ENCODE measurements at regions of chr1 and their contacts with region 1.

Region 1: GRCh38 chr1:165768513-165769394 is at the start of gene TMCO1:
- DNase-seq: peak; percentile 96
- H3K4me3 Mint-ChIP-seq: peak within 1 kb of the TSS; percentile 99
- H3K27ac Mint-ChIP-seq: peak within 1 kb of the TSS; percentile 99
- H3K4me1 Mint-ChIP-seq: peaks cover 57% of the 10 kb centered on the region
- H3K27me3 Mint-ChIP-seq: no peaks in the 10 kb centered on the region
- total RNA-seq, gene TMCO1: 73.2 to 76.7 TPM

Region 2: GRCh38 chr1:165630629-165631341 is 138.0 kb before region 1 on chr1 and contains the start of gene MGST3:
- CTCF ChIA-PET with region 1: no interaction called
- POLR2A ChIA-PET with region 1: interaction called, 4 read pairs
- intact Hi-C with region 1: loop called (anchors 1 kb)
- DNase-seq: peak; percentile 97
- H3K4me3 Mint-ChIP-seq: no peak within 1 kb of the TSS
- H3K27ac Mint-ChIP-seq: no peak within 1 kb of the TSS
- H3K4me1 Mint-ChIP-seq: peaks cover 15% of the 10 kb centered on the region
- H3K27me3 Mint-ChIP-seq: no peaks in the 10 kb centered on the region
- total RNA-seq, gene MGST3: 53.3 to 56.6 TPM

Region 3: GRCh38 chr1:165787741-165788140 is 19.0 kb after region 1 on chr1:
- CTCF ChIA-PET with region 1: no interaction called
- POLR2A ChIA-PET with region 1: no interaction called
- intact Hi-C with region 1: no loop called
- DNase-seq: no peak
- H3K4me3 Mint-ChIP-seq: no peak overlapping the region
- H3K27ac Mint-ChIP-seq: no peak overlapping the region
- H3K4me1 Mint-ChIP-seq: no peaks in the 10 kb centered on the region
- H3K27me3 Mint-ChIP-seq: peaks cover 2% of the 10 kb centered on the region

Region 4: DNA sequence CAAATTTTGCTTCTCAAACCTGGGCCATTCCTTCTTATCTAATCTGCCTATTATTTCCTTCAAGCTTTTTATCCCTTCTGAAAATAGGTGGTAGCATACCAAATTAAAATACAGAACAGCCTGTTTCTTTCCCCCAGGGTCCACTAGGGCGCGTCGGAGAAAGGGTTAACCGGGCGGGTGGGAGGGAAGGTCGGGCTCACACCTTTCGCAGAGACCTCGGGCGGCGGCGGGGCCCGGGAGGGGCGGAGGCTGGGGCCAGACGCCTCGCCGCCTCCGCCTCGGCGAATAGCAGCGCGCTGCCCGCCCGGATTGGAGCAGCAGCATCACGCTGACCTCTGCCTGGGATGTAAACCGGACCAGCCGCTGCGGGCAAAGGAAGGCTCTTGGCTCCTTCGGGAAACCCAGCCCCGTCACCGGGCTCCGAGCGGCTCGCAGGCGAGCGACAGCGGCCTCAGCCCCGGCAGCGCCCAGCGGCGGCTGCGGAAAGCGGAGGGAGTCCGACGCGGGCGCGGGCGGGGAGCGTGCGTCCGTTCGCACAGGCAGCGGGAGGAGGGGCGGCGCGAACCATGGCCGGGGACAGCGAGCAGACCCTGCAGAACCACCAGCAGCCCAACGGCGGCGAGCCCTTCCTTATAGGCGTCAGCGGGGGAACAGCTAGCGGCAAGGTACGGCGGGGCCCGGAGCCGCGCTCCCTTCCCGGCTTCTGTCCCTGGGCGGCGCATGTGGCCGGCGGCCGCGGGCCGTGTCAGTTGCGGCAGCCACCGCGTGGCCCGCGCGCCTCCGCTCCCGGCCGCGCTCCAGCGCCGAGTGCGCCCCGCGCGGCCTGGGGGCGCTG is 58.7 kb after region 1 on chr1 and contains the start of gene UCK2:
- CTCF ChIA-PET with region 1: no interaction called
- POLR2A ChIA-PET with region 1: interaction called, 14 read pairs
- intact Hi-C with region 1: loop called (anchors 1 kb)
- DNase-seq: peak; percentile 75
- H3K4me3 Mint-ChIP-seq: peak within 1 kb of the TSS; percentile 91
- H3K27ac Mint-ChIP-seq: peak within 1 kb of the TSS; percentile 88
- H3K4me1 Mint-ChIP-seq: peaks cover 9% of the 10 kb centered on the region
- H3K27me3 Mint-ChIP-seq: no peaks in the 10 kb centered on the region
- total RNA-seq, gene UCK2: 60.1 to 61.8 TPM

Region 5: GRCh38 chr1:165914136-165914798 is 145.5 kb after region 1 on chr1:
- CTCF ChIA-PET with region 1: interaction called, 13 read pairs
- POLR2A ChIA-PET with region 1: no interaction called
- intact Hi-C with region 1: loop called (anchors 1 kb)
- DNase-seq: peak; percentile 71
- H3K4me3 Mint-ChIP-seq: no peak overlapping the region
- H3K27ac Mint-ChIP-seq: no peak overlapping the region
- H3K4me1 Mint-ChIP-seq: peaks cover 3% of the 10 kb centered on the region
- H3K27me3 Mint-ChIP-seq: no peaks in the 10 kb centered on the region

Region 6: GRCh38 chr1:166489670-166490436 is 721.1 kb after region 1 on chr1:
- CTCF ChIA-PET with region 1: no interaction called
- POLR2A ChIA-PET with region 1: no interaction called
- intact Hi-C with region 1: loop called (anchors 5 kb)
- DNase-seq: peak; percentile 58
- H3K4me3 Mint-ChIP-seq: no peak overlapping the region
- H3K27ac Mint-ChIP-seq: no peak overlapping the region
- H3K4me1 Mint-ChIP-seq: peaks cover 8% of the 10 kb centered on the region
- H3K27me3 Mint-ChIP-seq: peaks cover 1% of the 10 kb centered on the region

Measured in activated CD4-positive, alpha-beta memory T cell treated with anti-CD3 and anti-CD28 coated beads for 36 hours (primary cell).